Panc1 (cell line): ENCODE measurements at regions of chr12 and their contacts with region 1.

Region 1: GRCh38 chr12:26113853-26114719 is 10.8 kb downstream of the BHLHE41 start:
- DNase-seq: no peak
- ATAC-seq: peak; percentile 82
- H3K4me3 ChIP-seq: peak overlapping the region; percentile 56 to 68
- H3K27ac ChIP-seq: peak overlapping the region; percentile 100
- H3K4me1 ChIP-seq: peaks cover 92% of the 10 kb centered on the region
- H3K27me3 ChIP-seq: no peaks in the 10 kb centered on the region
- CTCF ChIP-seq: peak; percentile 55

Region 2: DNA sequence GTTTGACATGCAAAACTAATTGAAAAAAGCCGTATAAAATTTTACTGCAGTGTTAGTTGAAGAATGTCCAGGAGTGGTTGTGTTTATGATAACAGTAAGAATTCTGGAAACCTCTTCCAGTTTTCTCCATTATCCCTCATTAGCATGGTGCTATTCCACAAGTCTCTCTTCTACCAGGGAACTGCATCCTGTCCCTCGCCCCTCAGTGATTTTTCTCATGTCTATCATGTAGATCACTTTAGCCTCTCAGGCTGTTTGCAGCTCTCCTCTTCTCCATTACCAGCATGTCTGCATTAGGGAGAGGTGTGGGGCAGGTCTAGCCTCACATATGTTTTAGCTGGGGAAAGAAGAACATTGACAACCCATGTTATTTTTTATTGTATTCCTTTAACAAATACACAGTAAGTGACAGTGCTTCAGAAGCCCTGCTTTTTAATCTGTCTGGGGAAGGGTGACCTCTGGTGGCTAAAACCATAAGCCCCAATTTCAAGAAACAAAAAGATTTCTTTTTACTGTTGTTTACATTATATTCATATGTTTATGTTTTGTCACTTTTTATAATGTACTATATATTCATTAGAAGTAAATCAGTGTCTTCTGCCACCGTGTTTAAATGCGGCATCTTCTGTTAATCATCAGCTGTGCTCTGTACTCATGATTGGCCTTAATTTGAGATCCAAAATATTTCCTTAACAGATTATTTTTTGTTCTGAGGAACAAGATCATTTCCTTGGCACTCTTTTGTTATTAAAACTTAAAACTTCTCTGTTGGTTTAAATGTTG is 84.9 kb before region 1 on chr12:
- CTCF ChIA-PET with region 1: no interaction called
- POLR2A ChIA-PET with region 1: no interaction called
- in situ Hi-C with region 1: no loop called
- intact Hi-C with region 1: no loop called
- DNase-seq: no peak
- ATAC-seq: peak; percentile 77
- H3K4me3 ChIP-seq: no peak overlapping the region
- H3K27ac ChIP-seq: peak overlapping the region; percentile 82; the same call in 1 of the 2 replicates
- H3K4me1 ChIP-seq: peaks cover 71% of the 10 kb centered on the region
- H3K27me3 ChIP-seq: no peaks in the 10 kb centered on the region
- CTCF ChIP-seq: peak; percentile 97

Region 3: GRCh38 chr12:26044012-26044383 is 70.1 kb before region 1 on chr12:
- CTCF ChIA-PET with region 1: no interaction called
- POLR2A ChIA-PET with region 1: no interaction called
- in situ Hi-C with region 1: no loop called
- intact Hi-C with region 1: no loop called
- DNase-seq: no peak
- ATAC-seq: peak; percentile 49
- H3K4me3 ChIP-seq: peak overlapping the region in 1 of 2 experiments; percentile 10; a peak in 1 of 4 replicates
- H3K27ac ChIP-seq: peak overlapping the region; percentile 82
- H3K4me1 ChIP-seq: peaks cover 59% of the 10 kb centered on the region
- H3K27me3 ChIP-seq: no peaks in the 10 kb centered on the region
- CTCF ChIP-seq: no peak

Region 4: DNA sequence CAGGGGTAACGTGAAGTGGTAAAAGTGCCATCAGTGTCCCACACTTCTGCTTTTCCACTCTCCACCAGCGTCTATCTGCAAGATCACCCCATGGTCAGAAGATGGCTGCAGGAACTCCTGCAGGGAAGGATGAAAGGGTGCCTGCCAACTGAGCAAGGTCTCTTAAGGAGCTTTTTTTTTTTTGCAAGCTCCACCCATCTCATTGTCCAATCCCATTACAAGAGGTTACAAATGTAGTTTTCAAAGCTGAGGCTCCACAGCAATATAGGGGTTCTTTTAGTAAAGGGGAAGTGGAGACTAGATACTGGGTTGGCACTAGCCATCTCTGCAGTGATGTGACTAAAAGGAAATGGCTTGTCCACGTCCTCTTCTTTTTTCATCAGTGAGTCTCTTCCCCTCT is 16.6 kb after region 1 on chr12:
- CTCF ChIA-PET with region 1: no interaction called
- POLR2A ChIA-PET with region 1: no interaction called
- in situ Hi-C with region 1: no loop called
- intact Hi-C with region 1: no loop called
- DNase-seq: no peak
- ATAC-seq: no peak
- H3K4me3 ChIP-seq: no peak overlapping the region
- H3K27ac ChIP-seq: no peak overlapping the region; the same call in 1 of the 2 replicates
- H3K4me1 ChIP-seq: peaks cover 34% of the 10 kb centered on the region
- H3K27me3 ChIP-seq: peaks cover 5% of the 10 kb centered on the region; the same call in 1 of the 2 replicates
- CTCF ChIP-seq: no peak

Region 5: GRCh38 chr12:26434299-26435068 is 320.4 kb after region 1 on chr12:
- CTCF ChIA-PET with region 1: no interaction called
- POLR2A ChIA-PET with region 1: no interaction called
- in situ Hi-C with region 1: no loop called
- intact Hi-C with region 1: loop called (anchors 10 kb)
- DNase-seq: peak; percentile 68
- ATAC-seq: peak; percentile 92
- H3K4me3 ChIP-seq: no peak overlapping the region
- H3K27ac ChIP-seq: no peak overlapping the region
- H3K4me1 ChIP-seq: no peaks in the 10 kb centered on the region; the same call in 1 of the 2 replicates
- H3K27me3 ChIP-seq: no peaks in the 10 kb centered on the region
- CTCF ChIP-seq: peak; percentile 79

Region 6: DNA sequence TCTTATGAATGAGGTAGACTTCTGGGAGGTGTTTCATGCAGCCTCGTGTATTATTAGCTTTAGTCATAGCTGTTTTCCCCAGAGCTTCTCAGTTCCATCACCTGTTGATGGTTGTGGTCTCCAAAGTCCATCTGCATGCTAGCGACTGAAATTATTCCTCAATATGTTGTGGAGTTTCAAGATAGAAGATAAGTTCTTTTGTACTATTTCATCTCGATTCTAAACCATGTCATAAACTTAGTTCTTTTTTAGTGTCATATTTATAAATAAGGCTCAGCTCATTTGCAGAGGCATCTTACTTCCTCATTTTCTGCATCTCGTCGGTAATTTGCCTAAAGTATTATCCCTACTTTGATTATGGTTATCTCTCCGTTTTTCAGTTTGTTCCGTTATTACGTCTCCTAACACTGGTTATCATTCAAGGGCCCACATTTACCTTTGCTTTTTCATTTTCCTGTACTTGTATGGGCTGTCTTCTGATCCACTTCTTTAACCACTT is 599.8 kb after region 1 on chr12:
- CTCF ChIA-PET with region 1: no interaction called
- POLR2A ChIA-PET with region 1: no interaction called
- in situ Hi-C with region 1: no loop called
- intact Hi-C with region 1: no loop called
- DNase-seq: no peak
- ATAC-seq: no peak
- H3K4me3 ChIP-seq: no peak overlapping the region
- H3K27ac ChIP-seq: no peak overlapping the region
- H3K4me1 ChIP-seq: no peaks in the 10 kb centered on the region
- H3K27me3 ChIP-seq: no peaks in the 10 kb centered on the region
- CTCF ChIP-seq: no peak